Head of caudate nucleus (tissue), 42 donors: ENCODE measurements at regions of chr5 and their contacts with region 1.

Region 1: GRCh38 chr5:103475629-103476240 is 86.9 kb downstream of the NUDT12 start:
- DNase-seq: peak in 2 of 42 donors; percentile 8 to 64

Region 2: DNA sequence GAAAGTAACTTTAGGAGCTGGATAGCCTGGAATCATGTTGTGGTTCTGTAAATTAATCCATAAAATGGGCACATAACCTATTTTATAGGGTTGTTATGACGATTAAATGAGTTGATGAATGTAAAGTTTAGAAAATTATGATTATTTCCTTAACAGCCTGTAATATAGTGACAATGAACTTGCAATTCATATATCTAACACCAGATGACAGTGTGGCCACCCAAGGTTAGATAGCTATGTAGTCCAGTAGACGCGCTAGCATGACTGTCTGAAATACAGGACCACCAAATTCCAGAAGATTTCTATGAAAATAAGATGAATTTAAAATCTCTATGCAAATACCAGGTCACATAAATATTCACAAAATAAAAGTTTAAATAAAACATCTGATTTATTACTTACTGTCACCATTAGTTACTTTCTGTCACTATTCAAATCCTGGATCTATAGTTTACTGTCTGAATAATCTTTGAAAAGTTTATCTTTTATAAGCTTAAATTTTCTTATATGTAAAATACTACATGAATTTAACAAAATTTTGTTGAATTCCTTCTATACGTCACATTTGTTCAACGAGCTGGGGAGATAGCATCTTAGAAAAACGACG is 243.2 kb before region 1 on chr5:
- intact Hi-C with region 1: loop called (anchors 5 kb)
- DNase-seq: peak in 15 of 42 donors; percentile 12 to 73 (median 32)